Activated CD4-positive, alpha-beta T cell treated with anti-CD3 and anti-CD28 coated beads for 36 hours (primary cell): ENCODE measurements at regions of chr1 and their contacts with region 1.

Region 1: DNA sequence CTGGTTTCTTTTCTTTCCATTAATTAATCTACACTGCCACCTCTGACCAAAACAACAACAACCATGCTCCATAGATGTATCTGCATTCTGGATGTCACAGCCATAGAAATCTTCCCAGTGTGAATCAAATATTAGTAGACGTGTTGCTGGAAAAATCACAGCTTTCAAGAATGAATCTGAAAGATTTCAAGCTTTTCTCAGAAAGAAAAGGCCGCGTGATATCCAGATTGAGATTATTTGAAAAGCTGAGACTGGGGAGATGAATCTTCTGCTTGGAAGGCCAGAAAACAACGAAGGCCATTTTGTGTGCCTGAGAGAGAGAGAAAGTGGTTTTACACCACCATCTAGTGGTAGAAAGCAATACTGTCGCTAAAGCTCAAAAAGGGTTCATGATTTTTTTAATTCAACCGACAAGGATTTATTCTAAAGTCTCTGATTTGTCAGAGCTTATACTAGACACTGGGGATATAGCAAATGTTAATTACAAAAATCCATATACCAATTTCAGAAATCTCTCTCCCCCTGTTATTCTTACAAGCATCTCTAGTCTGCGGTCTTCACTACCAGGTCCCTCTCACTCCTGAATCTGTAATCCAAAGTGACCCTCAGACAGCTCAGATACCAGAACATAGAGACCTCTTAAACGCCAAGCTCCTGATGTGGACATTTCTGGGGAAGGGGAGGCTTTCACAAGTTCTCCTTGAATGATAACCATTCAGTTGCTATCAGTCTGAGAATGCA is 87.5 kb upstream of the SGIP1 start:
- DNase-seq: peak; percentile 45
- ATAC-seq: peak; percentile 60
- H3K4me3 Mint-ChIP-seq: peak overlapping the region; percentile 64
- H3K27ac Mint-ChIP-seq: peak overlapping the region; percentile 97
- H3K4me1 Mint-ChIP-seq: peaks cover 33% of the 10 kb centered on the region
- H3K27me3 Mint-ChIP-seq: peaks cover 7% of the 10 kb centered on the region

Region 2: GRCh38 chr1:65687428-65688214 is 758.8 kb before region 1 on chr1:
- CTCF ChIA-PET with region 1: no interaction called
- POLR2A ChIA-PET with region 1: no interaction called
- intact Hi-C with region 1: loop called in 1 of 2 experiments (anchors 5 kb)
- DNase-seq: peak; percentile 88
- ATAC-seq: peak; percentile 88
- H3K4me3 Mint-ChIP-seq: no peak overlapping the region
- H3K27ac Mint-ChIP-seq: no peak overlapping the region
- H3K4me1 Mint-ChIP-seq: peaks cover 2% of the 10 kb centered on the region
- H3K27me3 Mint-ChIP-seq: peaks cover 10% of the 10 kb centered on the region

Region 3: GRCh38 chr1:66237042-66237441 is 209.4 kb before region 1 on chr1:
- CTCF ChIA-PET with region 1: interaction called, 359 read pairs
- POLR2A ChIA-PET with region 1: no interaction called
- intact Hi-C with region 1: no loop called
- DNase-seq: no peak
- ATAC-seq: no peak
- H3K4me3 Mint-ChIP-seq: no peak overlapping the region
- H3K27ac Mint-ChIP-seq: no peak overlapping the region
- H3K4me1 Mint-ChIP-seq: peaks cover under 1% of the 10 kb centered on the region
- H3K27me3 Mint-ChIP-seq: peaks cover 15% of the 10 kb centered on the region

Region 4: DNA sequence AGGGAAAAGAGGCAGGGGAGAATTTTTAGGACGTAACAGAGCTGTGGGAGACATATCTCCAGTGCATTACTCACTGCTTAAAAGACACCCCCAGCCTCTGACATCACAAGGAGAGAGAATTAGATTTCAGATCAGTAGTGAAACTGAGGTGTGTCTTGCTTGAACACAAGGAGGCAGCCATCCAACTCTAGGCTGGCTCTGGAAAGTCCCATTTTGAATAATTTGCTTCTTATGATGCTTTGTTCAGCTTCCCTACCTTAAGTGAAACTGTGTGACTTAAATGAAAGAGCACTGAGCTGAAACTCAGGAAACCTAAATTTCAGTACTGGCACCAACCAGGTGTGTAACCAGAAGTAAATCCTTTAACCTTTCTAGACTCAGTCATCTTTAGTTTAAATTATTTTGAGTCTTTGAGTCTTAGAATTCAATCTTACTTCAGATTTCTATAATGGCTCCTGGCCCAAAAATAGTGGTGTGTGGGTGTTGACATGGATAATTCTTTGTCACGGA is 164.0 kb before region 1 on chr1:
- CTCF ChIA-PET with region 1: interaction called, 7 read pairs
- POLR2A ChIA-PET with region 1: interaction called, 4 read pairs
- intact Hi-C with region 1: loop called in 1 of 2 experiments (anchors 1 kb)
- DNase-seq: peak; percentile 82
- ATAC-seq: peak; percentile 80
- H3K4me3 Mint-ChIP-seq: peak overlapping the region; percentile 29
- H3K27ac Mint-ChIP-seq: peak overlapping the region; percentile 90
- H3K4me1 Mint-ChIP-seq: peaks cover 93% of the 10 kb centered on the region
- H3K27me3 Mint-ChIP-seq: no peaks in the 10 kb centered on the region

Region 5: DNA sequence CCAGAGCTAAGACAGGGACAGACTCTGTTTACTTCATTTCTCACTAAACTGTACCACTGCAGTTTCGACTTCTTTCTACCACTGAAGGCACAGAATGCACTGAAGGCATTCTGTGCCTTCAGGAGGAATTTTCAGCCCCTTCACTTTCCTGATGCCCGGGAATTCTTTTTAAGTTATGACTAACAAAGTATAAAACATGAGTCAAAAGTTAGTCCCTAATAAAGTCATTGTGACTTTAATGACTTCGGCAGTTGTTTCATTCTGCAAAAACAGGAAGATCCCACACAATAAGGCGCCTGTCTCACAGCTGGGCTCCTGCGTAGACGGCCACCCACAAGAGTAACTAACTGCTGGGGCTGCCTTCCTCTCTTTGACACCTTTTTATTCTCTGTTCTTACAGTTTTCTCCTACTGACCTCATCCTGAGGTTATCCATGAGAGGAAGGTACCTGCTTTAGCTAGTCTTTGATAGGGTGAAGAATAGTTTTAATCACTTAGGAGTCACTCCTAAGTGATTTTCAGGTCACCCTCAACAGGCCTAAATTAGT is 96.4 kb before region 1 on chr1:
- CTCF ChIA-PET with region 1: interaction called, 39 read pairs
- POLR2A ChIA-PET with region 1: interaction called, 4 read pairs
- intact Hi-C with region 1: no loop called
- DNase-seq: peak; percentile 78
- ATAC-seq: peak; percentile 59
- H3K4me3 Mint-ChIP-seq: peak overlapping the region; percentile 57
- H3K27ac Mint-ChIP-seq: peak overlapping the region; percentile 88
- H3K4me1 Mint-ChIP-seq: peaks cover 93% of the 10 kb centered on the region
- H3K27me3 Mint-ChIP-seq: no peaks in the 10 kb centered on the region

Region 6: GRCh38 chr1:66460776-66461175 is 14.3 kb after region 1 on chr1:
- CTCF ChIA-PET with region 1: interaction called, 15 read pairs
- POLR2A ChIA-PET with region 1: no interaction called
- intact Hi-C with region 1: no loop called
- DNase-seq: no peak
- ATAC-seq: no peak
- H3K4me3 Mint-ChIP-seq: no peak overlapping the region
- H3K27ac Mint-ChIP-seq: no peak overlapping the region
- H3K4me1 Mint-ChIP-seq: no peaks in the 10 kb centered on the region
- H3K27me3 Mint-ChIP-seq: peaks cover 3% of the 10 kb centered on the region

Region 7: DNA sequence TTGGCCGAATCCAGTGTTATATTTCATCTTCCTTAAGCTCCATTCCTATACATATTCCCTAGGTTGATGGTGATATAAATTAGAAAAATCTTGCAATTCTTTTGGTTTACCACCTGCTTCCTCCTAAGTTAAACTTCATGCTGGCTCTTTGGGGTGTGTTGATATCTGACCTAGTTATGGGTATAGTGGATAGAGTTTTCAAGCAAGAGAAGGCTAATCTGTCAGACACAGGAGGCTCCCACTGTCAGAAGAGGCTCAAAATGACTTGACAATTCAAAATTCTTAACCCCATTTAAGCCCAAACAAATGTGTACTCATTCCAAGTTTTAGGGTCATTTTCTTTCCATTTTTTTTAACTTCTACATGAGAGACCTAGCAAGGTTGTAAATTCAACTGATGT is 616.0 kb after region 1 on chr1:
- CTCF ChIA-PET with region 1: no interaction called
- POLR2A ChIA-PET with region 1: no interaction called
- intact Hi-C with region 1: no loop called
- DNase-seq: no peak
- ATAC-seq: no peak
- H3K4me3 Mint-ChIP-seq: no peak overlapping the region
- H3K27ac Mint-ChIP-seq: no peak overlapping the region
- H3K4me1 Mint-ChIP-seq: no peaks in the 10 kb centered on the region
- H3K27me3 Mint-ChIP-seq: peaks cover 4% of the 10 kb centered on the region